ENCODE measurements at regions of chr12 and their contacts with region 1.

Region 1: GRCh38 chr12:60616400-60616799 is 1020.6 kb downstream of the SLC16A7 start:
- DNase-seq: no peak
- ATAC-seq: no peak
- H3K4me3 ChIP-seq: no peak overlapping the region
- H3K4me3 Mint-ChIP-seq: no peak overlapping the region
- H3K27ac ChIP-seq: no peak overlapping the region
- H3K27ac Mint-ChIP-seq: no peak overlapping the region
- H3K4me1 ChIP-seq: no peaks in the 10 kb centered on the region
- H3K4me1 Mint-ChIP-seq: no peaks in the 10 kb centered on the region
- H3K27me3 ChIP-seq: no peaks in the 10 kb centered on the region
- H3K27me3 Mint-ChIP-seq: no peaks in the 10 kb centered on the region
- CTCF ChIP-seq: no peak

Region 2: GRCh38 chr12:60279221-60279620 is 337.2 kb before region 1 on chr12:
- CTCF ChIA-PET with region 1: no interaction called
- POLR2A ChIA-PET with region 1: no interaction called
- intact Hi-C with region 1: loop called in 1 of 2 experiments (anchors 10 kb)
- DNase-seq: no peak
- ATAC-seq: no peak
- H3K4me3 ChIP-seq: no peak overlapping the region
- H3K4me3 Mint-ChIP-seq: no peak overlapping the region
- H3K27ac ChIP-seq: no peak overlapping the region
- H3K27ac Mint-ChIP-seq: no peak overlapping the region
- H3K4me1 ChIP-seq: no peaks in the 10 kb centered on the region
- H3K4me1 Mint-ChIP-seq: no peaks in the 10 kb centered on the region
- H3K27me3 ChIP-seq: no peaks in the 10 kb centered on the region
- H3K27me3 Mint-ChIP-seq: no peaks in the 10 kb centered on the region
- CTCF ChIP-seq: no peak

Measured in CD8-positive, alpha-beta T cell (primary cell).